MCF 10A (cell line): ENCODE measurements at regions of chr2 and their contacts with region 1.

Region 1: GRCh38 chr2:219560037-219560892 is 11.1 kb downstream of the OBSL1 start:
- DNase-seq: no peak
- H3K4me3 Mint-ChIP-seq: no peak overlapping the region
- H3K27ac Mint-ChIP-seq: no peak overlapping the region
- H3K4me1 Mint-ChIP-seq: no peaks in the 10 kb centered on the region
- H3K27me3 Mint-ChIP-seq: no peaks in the 10 kb centered on the region
- CTCF ChIP-seq: peak; percentile 80

Region 2: GRCh38 chr2:218979846-218980734 is 580.2 kb before region 1 on chr2:
- CTCF ChIA-PET with region 1: no interaction called
- POLR2A ChIA-PET with region 1: no interaction called
- intact Hi-C with region 1: no loop called
- DNase-seq: peak; percentile 78
- H3K4me3 Mint-ChIP-seq: peak overlapping the region; percentile 56
- H3K27ac Mint-ChIP-seq: no peak overlapping the region
- H3K4me1 Mint-ChIP-seq: peaks cover 15% of the 10 kb centered on the region
- H3K27me3 Mint-ChIP-seq: peaks cover 90% of the 10 kb centered on the region
- CTCF ChIP-seq: peak; percentile 89

Region 3: GRCh38 chr2:219057709-219058540 is 502.3 kb before region 1 on chr2:
- CTCF ChIA-PET with region 1: no interaction called
- POLR2A ChIA-PET with region 1: no interaction called
- intact Hi-C with region 1: no loop called
- DNase-seq: peak; percentile 51
- H3K4me3 Mint-ChIP-seq: no peak overlapping the region
- H3K27ac Mint-ChIP-seq: no peak overlapping the region
- H3K4me1 Mint-ChIP-seq: no peaks in the 10 kb centered on the region
- H3K27me3 Mint-ChIP-seq: peaks cover 63% of the 10 kb centered on the region
- CTCF ChIP-seq: peak; percentile 95

Region 4: GRCh38 chr2:219521066-219521880 is 39.0 kb before region 1 on chr2:
- CTCF ChIA-PET with region 1: no interaction called
- POLR2A ChIA-PET with region 1: no interaction called
- intact Hi-C with region 1: no loop called
- DNase-seq: peak; percentile 29
- H3K4me3 Mint-ChIP-seq: no peak overlapping the region
- H3K27ac Mint-ChIP-seq: no peak overlapping the region
- H3K4me1 Mint-ChIP-seq: peaks cover 18% of the 10 kb centered on the region
- H3K27me3 Mint-ChIP-seq: peaks cover 58% of the 10 kb centered on the region
- CTCF ChIP-seq: peak; percentile 51

Region 5: GRCh38 chr2:219543601-219544358 is 16.5 kb before region 1 on chr2 and contains the starts of genes CHPF and TMEM198:
- CTCF ChIA-PET with region 1: interaction called, 22 read pairs
- POLR2A ChIA-PET with region 1: interaction called, 6 read pairs
- intact Hi-C with region 1: no loop called
- DNase-seq: peak; percentile 98
- H3K4me3 Mint-ChIP-seq: peak within 1 kb of the TSS; percentile 75
- H3K27ac Mint-ChIP-seq: peak within 1 kb of the TSS; percentile 57
- H3K4me1 Mint-ChIP-seq: peaks cover 12% of the 10 kb centered on the region
- H3K27me3 Mint-ChIP-seq: no peaks in the 10 kb centered on the region
- CTCF ChIP-seq: no peak
- total RNA-seq, gene CHPF: 81.2 and 105 TPM in 2 replicates
- total RNA-seq, gene TMEM198: 5.3 and 6.3 TPM in 2 replicates

Region 6: DNA sequence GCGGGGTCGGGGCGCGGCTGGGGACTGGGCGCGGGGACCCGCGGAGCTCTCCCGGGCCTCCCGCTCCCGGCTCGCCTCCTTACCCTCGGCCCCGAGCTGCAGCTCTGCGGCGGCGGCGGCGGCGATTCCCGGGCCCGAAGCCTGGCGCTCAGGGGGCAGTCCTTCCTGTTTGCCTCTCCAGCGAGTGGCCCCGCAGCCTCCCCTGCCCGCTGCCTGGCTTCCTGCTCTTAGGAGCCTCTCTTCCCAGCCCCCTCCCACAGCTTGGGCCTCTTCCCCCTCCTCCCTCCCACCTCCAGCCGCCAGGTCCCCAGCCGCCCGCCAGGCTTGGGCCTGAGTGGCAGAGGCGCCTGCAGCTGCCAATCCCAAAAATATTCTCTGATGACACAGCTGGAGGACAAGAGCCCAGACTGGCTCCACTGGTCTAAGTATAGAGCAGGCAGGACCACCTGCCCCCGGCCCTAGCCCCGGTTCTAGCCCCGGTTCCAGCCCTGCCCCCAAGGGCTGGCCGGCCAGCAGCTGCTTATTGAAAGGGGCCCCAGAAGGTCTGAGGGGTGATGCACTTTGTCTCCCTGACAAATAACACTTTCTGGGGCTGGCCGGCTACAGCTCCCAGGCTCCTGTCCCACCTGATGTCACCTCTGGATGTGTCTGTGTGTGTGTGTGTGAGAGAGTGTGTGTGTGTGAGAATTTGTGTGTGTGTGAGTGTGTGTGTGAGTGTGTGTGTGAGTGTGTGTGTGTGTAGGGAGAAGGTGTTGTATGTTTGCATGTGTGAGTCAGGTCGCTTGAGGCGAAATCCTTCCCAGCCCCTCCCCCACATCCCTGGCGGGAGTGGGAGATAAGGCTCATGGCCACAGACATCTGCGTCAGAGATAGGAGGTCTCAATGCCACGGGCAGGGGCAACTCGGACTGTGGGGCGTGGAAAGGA is 11.3 kb after region 1 on chr2 and contains the start of gene OBSL1:
- CTCF ChIA-PET with region 1: interaction called, 23 read pairs
- POLR2A ChIA-PET with region 1: interaction called, 6 read pairs
- intact Hi-C with region 1: no loop called
- DNase-seq: peak; percentile 60
- H3K4me3 Mint-ChIP-seq: peak within 1 kb of the TSS; percentile 49
- H3K27ac Mint-ChIP-seq: no peak within 1 kb of the TSS
- H3K4me1 Mint-ChIP-seq: peaks cover 7% of the 10 kb centered on the region
- H3K27me3 Mint-ChIP-seq: no peaks in the 10 kb centered on the region
- CTCF ChIP-seq: no peak
- total RNA-seq, gene OBSL1: 29.0 and 29.8 TPM in 2 replicates

Region 7: GRCh38 chr2:219578790-219579616 is 18.7 kb after region 1 on chr2:
- CTCF ChIA-PET with region 1: interaction called, 10 read pairs
- POLR2A ChIA-PET with region 1: no interaction called
- intact Hi-C with region 1: no loop called
- DNase-seq: peak; percentile 74
- H3K4me3 Mint-ChIP-seq: peak overlapping the region; percentile 40
- H3K27ac Mint-ChIP-seq: peak overlapping the region; percentile 78
- H3K4me1 Mint-ChIP-seq: peaks cover 7% of the 10 kb centered on the region
- H3K27me3 Mint-ChIP-seq: no peaks in the 10 kb centered on the region
- CTCF ChIP-seq: no peak